ENCODE measurements at regions of chr1 and their contacts with region 1.

Region 1: GRCh38 chr1:11907275-11908094 is 18.7 kb downstream of the KIAA2013 start:
- DNase-seq: peak; percentile 91
- H3K4me3 Mint-ChIP-seq: peak overlapping the region; percentile 81
- H3K27ac Mint-ChIP-seq: peak overlapping the region; percentile 94
- H3K4me1 Mint-ChIP-seq: peaks cover 38% of the 10 kb centered on the region
- H3K27me3 Mint-ChIP-seq: peaks cover 19% of the 10 kb centered on the region

Region 2: GRCh38 chr1:11272832-11273594 is 634.5 kb before region 1 on chr1 and contains the start of gene UBIAD1:
- intact Hi-C with region 1: loop called (anchors 10 kb)
- DNase-seq: peak; percentile 75
- H3K4me3 Mint-ChIP-seq: peak within 1 kb of the TSS; percentile 98
- H3K27ac Mint-ChIP-seq: peak within 1 kb of the TSS; percentile 95
- H3K4me1 Mint-ChIP-seq: peaks cover 25% of the 10 kb centered on the region
- H3K27me3 Mint-ChIP-seq: peaks cover 2% of the 10 kb centered on the region
- total RNA-seq, gene UBIAD1: 30.5 and 33.1 TPM in 2 replicates

Region 3: DNA sequence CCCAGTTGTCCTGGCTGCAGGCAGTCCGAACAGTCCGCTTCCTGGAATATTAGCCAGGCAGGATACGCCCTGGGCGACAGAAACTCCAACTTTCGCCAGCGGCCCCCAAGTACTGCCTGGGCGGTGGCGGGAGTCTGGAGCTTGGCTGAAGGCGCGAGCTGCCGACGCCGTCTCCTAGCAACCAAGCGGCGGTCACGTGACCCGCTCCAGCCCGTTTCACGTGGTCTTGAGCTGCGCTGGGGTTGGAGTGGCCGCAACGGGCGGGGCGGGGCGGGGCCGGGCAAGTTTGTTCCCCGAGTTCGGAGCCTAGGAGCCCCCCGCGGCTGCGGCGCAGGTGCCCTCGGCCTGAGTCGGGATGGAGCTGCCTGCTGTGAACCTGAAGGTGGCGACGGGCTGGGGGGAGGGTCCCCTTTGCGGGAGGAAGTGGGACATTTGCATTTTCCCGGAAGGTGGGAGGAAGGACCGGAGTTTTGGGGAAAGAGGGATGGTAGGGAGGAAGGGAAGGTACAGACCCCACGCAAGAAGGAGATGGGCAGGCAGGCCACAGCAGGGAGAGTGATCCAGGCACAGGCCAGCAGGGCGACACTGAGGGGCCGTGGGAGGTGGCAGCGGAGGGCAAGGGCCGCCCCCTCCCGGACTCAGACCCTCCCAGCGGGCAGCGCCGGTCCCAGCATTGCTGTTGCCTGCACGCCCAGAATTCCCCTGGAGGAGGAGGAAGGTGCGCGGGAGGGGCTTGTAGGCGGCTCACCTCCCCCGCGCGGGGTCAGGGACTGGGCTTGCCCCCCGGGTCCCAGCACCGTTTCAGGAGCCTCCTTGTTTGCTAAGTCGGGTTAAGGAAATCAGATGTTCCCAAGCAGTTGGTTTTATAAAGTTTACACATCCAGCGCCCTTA is 171.4 kb before region 1 on chr1 and contains the start of gene AGTRAP:
- intact Hi-C with region 1: loop called (anchors 1 kb)
- DNase-seq: peak; percentile 84
- H3K4me3 Mint-ChIP-seq: peak within 1 kb of the TSS; percentile 96
- H3K27ac Mint-ChIP-seq: peak within 1 kb of the TSS; percentile 88
- H3K4me1 Mint-ChIP-seq: peaks cover 67% of the 10 kb centered on the region
- H3K27me3 Mint-ChIP-seq: no peaks in the 10 kb centered on the region
- total RNA-seq, gene AGTRAP: 13.8 and 15.9 TPM in 2 replicates

Region 4: DNA sequence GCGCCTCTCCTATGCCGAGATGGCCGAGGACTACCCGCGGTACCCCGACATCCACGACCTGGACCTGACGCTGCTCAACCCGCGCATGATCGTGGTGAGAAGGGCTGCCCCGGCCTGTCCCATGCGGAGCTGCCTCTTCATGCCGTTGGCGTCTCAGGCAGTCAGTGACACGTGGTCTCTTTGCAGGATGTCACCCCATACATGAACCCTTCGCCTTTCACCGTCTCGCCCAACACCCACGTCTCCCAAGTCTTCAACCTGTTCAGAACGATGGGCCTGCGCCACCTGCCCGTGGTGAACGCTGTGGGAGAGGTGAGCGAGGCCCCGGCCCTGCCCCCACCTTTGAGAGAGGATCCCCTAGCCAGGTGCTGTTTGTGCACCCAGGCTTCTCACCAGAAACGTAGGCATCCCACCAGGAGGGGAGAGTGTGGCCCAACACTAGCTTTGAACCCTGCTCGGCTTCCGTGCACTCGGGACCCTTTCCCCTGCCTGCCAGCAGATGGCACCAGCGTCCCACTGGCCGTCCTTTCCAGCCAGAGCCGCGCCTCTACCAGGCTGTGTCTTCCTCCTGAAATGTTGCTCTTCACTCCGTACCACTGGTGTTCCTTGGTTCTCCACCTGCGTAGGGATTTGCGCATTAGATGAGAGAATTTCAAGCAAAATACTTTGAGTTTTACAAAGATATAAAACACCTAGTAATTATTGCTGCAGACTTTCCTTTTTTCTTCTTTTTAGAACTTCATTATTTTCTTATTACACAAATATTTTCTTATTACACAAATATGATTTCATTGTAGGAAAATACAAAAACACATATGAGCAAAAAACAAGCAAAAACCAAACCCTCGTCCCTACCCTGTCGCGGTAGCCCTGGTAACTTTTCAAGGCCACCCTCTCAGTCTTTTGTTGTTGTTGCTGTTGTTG is 68.9 kb before region 1 on chr1:
- intact Hi-C with region 1: loop called (anchors 1 kb)
- DNase-seq: peak; percentile 63
- H3K4me3 Mint-ChIP-seq: no peak overlapping the region
- H3K27ac Mint-ChIP-seq: no peak overlapping the region
- H3K4me1 Mint-ChIP-seq: no peaks in the 10 kb centered on the region
- H3K27me3 Mint-ChIP-seq: no peaks in the 10 kb centered on the region

Region 5: DNA sequence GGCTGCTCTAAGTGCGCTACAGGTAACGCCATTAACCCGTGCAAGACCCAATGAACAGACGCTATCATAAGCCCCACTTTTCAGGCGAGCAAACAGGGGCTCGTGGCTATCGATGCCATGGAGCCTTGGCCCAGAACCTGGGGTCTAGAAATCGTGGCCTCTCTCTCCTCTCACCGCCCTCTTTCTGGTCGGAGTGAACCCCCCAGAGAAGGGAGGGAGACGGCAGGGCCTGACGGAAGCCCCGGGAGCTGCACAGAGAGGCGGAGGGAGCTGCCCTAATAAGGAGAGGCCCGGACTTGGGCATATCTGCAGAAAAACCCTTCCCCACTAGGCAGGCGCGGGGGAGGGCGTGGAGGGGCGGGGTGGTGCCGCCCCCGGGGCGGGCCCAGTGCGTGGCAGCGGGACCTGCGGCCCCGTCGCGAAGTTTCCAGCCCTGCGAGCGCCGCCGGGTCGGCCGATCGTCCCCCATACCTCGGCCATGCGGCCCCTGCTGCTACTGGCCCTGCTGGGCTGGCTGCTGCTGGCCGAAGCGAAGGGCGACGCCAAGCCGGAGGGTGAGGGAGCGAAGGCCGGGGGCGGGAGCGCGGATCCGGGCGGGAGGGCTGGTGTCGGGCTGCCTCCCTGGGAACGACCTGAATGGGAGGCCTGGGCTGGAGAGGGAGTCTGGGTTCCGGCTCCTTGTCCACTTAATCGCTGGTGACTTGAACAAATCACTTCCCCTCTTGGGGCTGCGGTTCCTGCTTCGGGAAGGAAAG is 27.0 kb after region 1 on chr1 and contains the start of gene PLOD1:
- intact Hi-C with region 1: loop called (anchors 1 kb)
- DNase-seq: peak; percentile 78
- H3K4me3 Mint-ChIP-seq: peak within 1 kb of the TSS; percentile 82
- H3K27ac Mint-ChIP-seq: peak within 1 kb of the TSS; percentile 58
- H3K4me1 Mint-ChIP-seq: peaks cover 9% of the 10 kb centered on the region
- H3K27me3 Mint-ChIP-seq: peaks cover 2% of the 10 kb centered on the region
- total RNA-seq, gene PLOD1: 32.3 and 37.8 TPM in 2 replicates

Region 6: DNA sequence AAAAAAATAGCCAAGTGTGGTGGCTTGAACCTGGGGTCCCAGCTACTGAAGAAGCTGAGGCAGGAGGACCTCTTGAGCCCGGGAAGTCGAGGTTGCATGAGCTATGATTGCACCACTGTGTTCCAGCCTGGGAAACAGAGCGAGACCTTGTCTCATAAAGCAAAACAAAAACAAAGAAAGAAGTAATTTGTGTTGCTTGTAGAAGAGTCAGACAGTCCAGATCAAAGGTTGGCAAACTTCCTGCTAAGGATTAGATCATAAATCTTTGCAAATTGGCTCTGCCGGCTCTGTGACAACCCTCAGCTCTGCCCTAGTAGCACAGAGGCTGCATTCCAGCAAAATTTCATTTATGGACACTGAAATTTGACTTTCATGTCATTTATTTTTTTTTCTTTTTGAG is 53.7 kb after region 1 on chr1:
- intact Hi-C with region 1: no loop called
- DNase-seq: no peak
- H3K4me3 Mint-ChIP-seq: no peak overlapping the region
- H3K27ac Mint-ChIP-seq: no peak overlapping the region
- H3K4me1 Mint-ChIP-seq: no peaks in the 10 kb centered on the region
- H3K27me3 Mint-ChIP-seq: no peaks in the 10 kb centered on the region

Region 7: GRCh38 chr1:12019858-12020509 is 112.5 kb after region 1 on chr1:
- intact Hi-C with region 1: loop called (anchors 1 kb)
- DNase-seq: no peak
- H3K4me3 Mint-ChIP-seq: peak overlapping the region; percentile 82
- H3K27ac Mint-ChIP-seq: peak overlapping the region; percentile 55
- H3K4me1 Mint-ChIP-seq: peaks cover 23% of the 10 kb centered on the region
- H3K27me3 Mint-ChIP-seq: no peaks in the 10 kb centered on the region

Region 8: GRCh38 chr1:12067900-12068821 is 160.7 kb after region 1 on chr1:
- intact Hi-C with region 1: loop called (anchors 5 kb)
- DNase-seq: peak; percentile 47
- H3K4me3 Mint-ChIP-seq: peak overlapping the region; percentile 73
- H3K27ac Mint-ChIP-seq: peak overlapping the region; percentile 94
- H3K4me1 Mint-ChIP-seq: peaks cover 68% of the 10 kb centered on the region
- H3K27me3 Mint-ChIP-seq: peaks cover 2% of the 10 kb centered on the region

Measured in activated T-helper 1 cell treated with anti-CD3 and anti-CD28 coated beads, Interleukin-12 subunit alpha, Interleukin-12 subunit beta, Interleukin-2, Interleukin-4 antibody, amounts not matched to agents 30 ng/mL and 10 ng/mL and 1 ng/mL, durations not matched to agents 14 hours and 24 hours and 36 hours (primary cell).